GM10248 (cell line): ENCODE measurements at regions of chr5 and their contacts with region 1.

Region 1: GRCh38 chr5:149381987-149382340 is 2.9 kb upstream of the IL17B start:
- DNase-seq: peak; percentile 89
- CTCF ChIP-seq: peak; percentile 94

Region 2: DNA sequence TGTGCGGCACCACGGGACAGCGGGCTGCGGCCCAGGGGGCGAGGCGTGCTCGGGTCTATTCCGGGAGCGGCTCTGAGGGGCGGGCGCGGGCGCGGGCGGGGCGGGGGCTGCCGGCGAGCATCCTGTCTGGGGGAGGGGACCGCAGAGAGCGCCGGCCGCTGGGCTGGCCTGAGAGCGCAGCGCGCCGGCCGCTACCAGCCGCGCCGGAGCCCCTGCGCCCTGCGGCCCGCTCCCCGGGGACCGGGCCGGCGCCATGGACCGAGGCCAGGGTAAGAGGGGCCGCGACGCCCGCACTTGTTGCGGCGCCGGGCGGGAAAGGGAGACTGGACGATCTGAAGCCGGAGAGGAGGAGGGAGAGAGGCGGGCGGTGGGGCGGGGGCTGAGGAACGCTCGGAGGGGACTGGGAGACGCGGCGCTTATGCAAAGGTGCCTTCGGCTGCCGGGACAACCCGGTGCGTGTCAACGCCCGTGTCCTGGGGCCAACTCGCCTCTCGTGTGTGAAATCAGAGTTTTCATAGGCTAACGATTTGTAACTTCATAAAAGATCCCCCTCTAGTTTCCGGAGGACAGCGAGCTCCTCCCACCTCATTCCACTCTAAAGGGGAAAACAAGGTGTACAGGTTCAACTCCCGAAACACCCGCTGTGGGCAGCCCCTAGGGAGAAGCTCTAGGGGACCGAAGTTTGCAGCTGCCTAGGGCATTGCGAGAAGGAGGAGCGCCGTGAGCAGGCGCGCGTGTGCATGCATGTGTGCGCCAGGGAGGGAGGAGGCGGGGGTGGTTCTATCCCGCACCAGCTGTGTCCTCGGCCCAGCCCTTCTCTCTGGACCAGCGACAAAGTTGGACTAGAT is 110.0 kb before region 1 on chr5 and contains the start of gene AFAP1L1:
- CTCF ChIA-PET with region 1: no interaction called
- POLR2A ChIA-PET with region 1: no interaction called
- DNase-seq: no peak
- CTCF ChIP-seq: no peak

Region 3: DNA sequence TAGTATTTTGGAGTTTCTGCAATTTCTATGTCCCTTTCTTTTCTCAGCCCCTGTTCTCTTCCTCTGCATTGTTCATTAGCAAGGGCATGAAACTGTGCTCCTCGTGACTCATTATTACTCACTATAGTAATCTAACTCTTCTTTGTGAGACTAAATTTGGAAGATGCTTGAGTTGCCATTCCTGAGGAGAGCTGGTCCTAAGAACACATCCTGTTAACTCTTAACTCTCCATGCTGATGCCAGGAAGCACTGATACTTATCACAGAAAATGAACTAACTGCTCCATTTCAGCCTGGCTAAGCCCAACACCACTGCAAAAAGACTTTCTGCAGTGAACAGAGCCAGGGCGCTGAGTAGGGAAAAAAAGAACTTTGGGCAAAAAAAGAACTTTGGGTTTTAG is 179.9 kb after region 1 on chr5:
- CTCF ChIA-PET with region 1: interaction called, 53 read pairs
- POLR2A ChIA-PET with region 1: no interaction called
- DNase-seq: no peak
- CTCF ChIP-seq: no peak

Region 4: DNA sequence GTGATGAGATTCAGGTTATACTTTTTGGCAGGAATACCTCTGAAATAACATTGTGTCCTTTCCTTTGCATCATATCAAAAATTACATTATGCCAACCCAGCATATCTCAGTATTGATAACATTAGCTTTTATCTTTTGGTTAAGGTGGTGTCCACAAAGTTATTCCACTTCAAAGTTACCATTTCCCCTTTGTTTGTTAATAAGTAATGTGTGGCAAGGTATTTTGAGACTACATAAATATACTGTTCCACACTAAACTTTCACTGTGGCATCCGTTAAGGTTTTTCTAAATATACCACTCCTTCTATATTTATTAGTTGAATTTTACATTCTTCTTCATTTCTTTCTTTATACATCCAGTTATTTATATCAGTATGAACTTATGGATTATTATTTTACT is 185.3 kb after region 1 on chr5:
- CTCF ChIA-PET with region 1: interaction called, 53 read pairs
- POLR2A ChIA-PET with region 1: no interaction called
- DNase-seq: no peak
- CTCF ChIP-seq: no peak